ENCODE measurements at regions of chr2 and their contacts with region 1.

Region 1: DNA sequence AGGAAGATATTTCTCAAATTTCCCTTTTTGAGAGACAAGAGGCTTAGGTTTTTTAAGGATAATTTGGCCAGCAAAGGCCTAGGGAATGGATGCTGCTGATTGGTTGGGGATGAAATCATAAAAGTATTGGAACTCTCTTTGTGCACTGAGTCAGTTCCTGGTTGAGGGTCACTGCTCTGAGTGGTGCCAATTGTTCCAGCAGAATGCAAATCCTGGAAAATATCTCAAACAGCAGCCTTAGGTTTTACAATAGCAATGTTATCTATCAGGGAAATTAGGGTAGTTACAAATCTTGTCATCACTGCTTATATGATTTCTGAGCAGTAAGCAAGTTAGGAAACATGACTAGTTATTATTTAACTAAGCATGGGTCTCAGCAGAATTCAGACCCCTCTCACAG is 96.2 kb downstream of the RAD51AP2 start:
- DNase-seq: no peak
- H3K4me3 ChIP-seq: no peak overlapping the region
- H3K27me3 ChIP-seq: no peaks in the 10 kb centered on the region
- CTCF ChIP-seq: no peak

Region 2: GRCh38 chr2:16700551-16701259 is 721.4 kb before region 1 on chr2:
- CTCF ChIA-PET with region 1: no interaction called
- POLR2A ChIA-PET with region 1: no interaction called
- DNase-seq: no peak
- H3K4me3 ChIP-seq: no peak overlapping the region
- H3K27me3 ChIP-seq: no peaks in the 10 kb centered on the region
- CTCF ChIP-seq: no peak

Region 3: GRCh38 chr2:17628349-17629261 is 206.5 kb after region 1 on chr2:
- CTCF ChIA-PET with region 1: no interaction called
- POLR2A ChIA-PET with region 1: interaction called, 18 read pairs
- DNase-seq: no peak
- H3K4me3 ChIP-seq: no peak overlapping the region
- H3K27me3 ChIP-seq: no peaks in the 10 kb centered on the region
- CTCF ChIP-seq: no peak